AG04449 (cell line): ENCODE measurements at regions of chr2 and their contacts with region 1.

Region 1: GRCh38 chr2:176454893-176455811 is 185.9 kb downstream of the MTX2 start:
- DNase-seq: no peak
- H3K4me3 ChIP-seq: no peak overlapping the region
- CTCF ChIP-seq: peak; percentile 71

Region 2: GRCh38 chr2:176157499-176158185 is 297.5 kb before region 1 on chr2:
- CTCF ChIA-PET with region 1: interaction called, 50 read pairs
- POLR2A ChIA-PET with region 1: no interaction called
- DNase-seq: no peak
- H3K4me3 ChIP-seq: peak overlapping the region; percentile 57
- CTCF ChIP-seq: no peak

Region 3: GRCh38 chr2:176269319-176270099 is 185.6 kb before region 1 on chr2 and contains the start of gene MTX2:
- CTCF ChIA-PET with region 1: interaction called, 10 read pairs
- POLR2A ChIA-PET with region 1: no interaction called
- DNase-seq: no peak
- H3K4me3 ChIP-seq: peak within 1 kb of the TSS; percentile 86
- CTCF ChIP-seq: peak; percentile 0

Region 4: GRCh38 chr2:176473177-176473576 is 18.0 kb after region 1 on chr2:
- CTCF ChIA-PET with region 1: interaction called, 38 read pairs
- POLR2A ChIA-PET with region 1: no interaction called
- DNase-seq: no peak
- H3K4me3 ChIP-seq: no peak overlapping the region
- CTCF ChIP-seq: no peak

Region 5: DNA sequence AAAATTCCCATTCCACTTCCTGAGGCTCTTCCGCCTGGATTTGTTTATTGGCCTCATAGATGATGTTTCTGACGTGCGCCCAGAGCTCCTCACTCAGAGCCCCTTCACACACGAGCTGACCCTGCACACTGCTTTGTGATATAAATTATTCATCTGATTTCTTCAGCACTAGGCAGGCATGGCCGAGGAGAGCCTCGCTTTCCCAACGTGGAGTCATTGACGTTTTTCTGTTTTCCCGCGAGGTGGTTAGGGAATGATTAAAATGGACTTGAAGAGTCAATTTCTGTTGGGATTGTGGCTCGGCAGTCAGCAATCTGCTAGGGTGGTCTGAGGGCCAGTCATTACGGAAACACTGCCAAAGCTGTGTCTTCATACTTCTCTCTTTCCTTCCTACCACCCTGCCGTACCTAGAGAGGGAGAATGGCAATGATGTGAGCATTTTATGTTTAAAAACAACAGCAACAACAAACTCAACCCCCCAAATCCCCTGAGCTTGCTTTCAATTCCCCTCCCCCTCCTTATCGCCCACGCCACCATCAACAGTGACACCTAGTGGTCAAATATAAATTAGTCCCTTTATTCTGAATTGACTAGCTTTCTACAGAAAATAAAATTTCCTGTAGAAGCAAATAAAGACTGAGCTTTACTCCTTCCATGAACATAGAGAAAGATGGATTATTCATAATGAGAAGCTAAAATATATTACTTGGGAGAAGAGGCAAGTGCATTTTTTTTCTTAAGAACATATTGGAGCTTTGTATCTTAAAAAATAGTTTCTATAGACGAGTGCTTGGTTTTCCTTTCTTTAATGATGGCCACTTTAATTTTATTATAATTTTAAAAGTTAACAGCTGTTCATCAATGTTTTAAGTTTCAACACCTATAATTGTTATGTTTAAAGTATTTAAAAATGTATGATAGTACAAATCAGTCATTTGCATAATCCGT is 99.2 kb after region 1 on chr2:
- CTCF ChIA-PET with region 1: interaction called, 58 read pairs
- POLR2A ChIA-PET with region 1: interaction called, 3 read pairs
- DNase-seq: no peak
- H3K4me3 ChIP-seq: peak overlapping the region; percentile 50
- CTCF ChIP-seq: peak; percentile 52

Region 6: GRCh38 chr2:177392373-177393202 is 937.4 kb after region 1 on chr2 and contains the start of gene AGPS:
- CTCF ChIA-PET with region 1: no interaction called
- POLR2A ChIA-PET with region 1: no interaction called
- DNase-seq: no peak
- H3K4me3 ChIP-seq: peak within 1 kb of the TSS; percentile 78
- CTCF ChIP-seq: peak; percentile 22